ENCODE measurements at regions of chr17 and their contacts with region 1.

Region 1: DNA sequence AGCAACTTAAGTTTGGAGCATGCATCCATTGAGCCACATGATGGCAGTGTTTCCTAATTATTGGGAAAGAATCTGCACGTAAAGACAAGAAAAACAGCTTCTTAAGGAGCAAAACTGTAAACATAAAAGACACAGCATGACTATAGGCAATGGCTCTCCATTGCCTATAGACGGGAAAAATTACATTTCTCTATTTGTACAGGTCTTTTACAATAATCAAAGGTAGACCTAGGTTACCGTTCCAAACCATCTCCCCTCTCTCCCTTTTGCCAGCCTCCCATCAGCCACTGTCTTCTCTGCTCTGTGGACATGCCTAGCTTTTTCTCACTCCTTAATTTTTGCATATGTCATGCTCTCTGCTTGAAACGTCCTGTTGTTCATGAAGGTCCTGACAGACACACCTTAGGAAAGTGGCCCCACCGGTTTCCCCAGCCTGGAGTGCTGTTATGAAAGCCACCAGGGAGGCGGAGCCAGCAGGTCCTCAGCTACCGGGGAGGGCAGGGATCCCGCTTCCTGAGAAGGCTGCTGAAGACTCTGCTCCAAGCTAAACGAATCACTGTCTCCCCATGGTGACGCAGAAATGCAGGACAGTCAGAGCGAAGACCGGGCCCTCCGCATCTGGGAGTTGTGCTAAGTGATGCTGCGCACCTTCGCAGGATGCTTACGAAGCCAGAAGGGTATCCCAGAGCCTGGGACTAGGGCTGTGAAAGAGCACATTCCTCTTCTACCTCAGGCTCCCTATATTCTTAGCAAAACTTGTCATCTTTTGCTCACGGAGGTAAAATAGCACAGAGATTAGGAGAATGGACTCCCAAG is 2.2 kb upstream of the SLC16A11 start:
- DNase-seq: peak in 1 of 2 donors; percentile 90
- ATAC-seq: peak; percentile 28 to 49 (median 33)
- H3K4me3 ChIP-seq: peak overlapping the region; percentile 34
- H3K4me3 Mint-ChIP-seq: peak overlapping the region; percentile 87
- H3K27ac ChIP-seq: peak overlapping the region; percentile 45
- H3K27ac Mint-ChIP-seq: peak overlapping the region; percentile 85 to 90
- H3K4me1 ChIP-seq: peaks cover 43% of the 10 kb centered on the region
- H3K4me1 Mint-ChIP-seq: peaks cover 26 to 45% of the 10 kb centered on the region in 2 donors
- H3K27me3 ChIP-seq: peaks cover 6% of the 10 kb centered on the region
- H3K27me3 Mint-ChIP-seq: peaks cover 0 to 7% of the 10 kb centered on the region in 2 donors
- CTCF ChIP-seq: peak; percentile 81

Region 2: GRCh38 chr17:7081341-7082062 is 35.4 kb after region 1 on chr17:
- intact Hi-C with region 1: loop called (anchors 5 kb)
- DNase-seq: peak; percentile 53 to 60
- ATAC-seq: peak; percentile 95 to 100 (median 97)
- H3K4me3 ChIP-seq: no peak overlapping the region
- H3K4me3 Mint-ChIP-seq: peak overlapping the region; percentile 75
- H3K27ac ChIP-seq: no peak overlapping the region
- H3K27ac Mint-ChIP-seq: peak overlapping the region in 1 of 2 donors; percentile 32
- H3K4me1 ChIP-seq: peaks cover 40% of the 10 kb centered on the region
- H3K4me1 Mint-ChIP-seq: peaks cover 41 to 69% of the 10 kb centered on the region in 2 donors
- H3K27me3 ChIP-seq: peaks cover 3% of the 10 kb centered on the region
- H3K27me3 Mint-ChIP-seq: peaks cover 11 to 12% of the 10 kb centered on the region in 2 donors
- CTCF ChIP-seq: no peak

Region 3: DNA sequence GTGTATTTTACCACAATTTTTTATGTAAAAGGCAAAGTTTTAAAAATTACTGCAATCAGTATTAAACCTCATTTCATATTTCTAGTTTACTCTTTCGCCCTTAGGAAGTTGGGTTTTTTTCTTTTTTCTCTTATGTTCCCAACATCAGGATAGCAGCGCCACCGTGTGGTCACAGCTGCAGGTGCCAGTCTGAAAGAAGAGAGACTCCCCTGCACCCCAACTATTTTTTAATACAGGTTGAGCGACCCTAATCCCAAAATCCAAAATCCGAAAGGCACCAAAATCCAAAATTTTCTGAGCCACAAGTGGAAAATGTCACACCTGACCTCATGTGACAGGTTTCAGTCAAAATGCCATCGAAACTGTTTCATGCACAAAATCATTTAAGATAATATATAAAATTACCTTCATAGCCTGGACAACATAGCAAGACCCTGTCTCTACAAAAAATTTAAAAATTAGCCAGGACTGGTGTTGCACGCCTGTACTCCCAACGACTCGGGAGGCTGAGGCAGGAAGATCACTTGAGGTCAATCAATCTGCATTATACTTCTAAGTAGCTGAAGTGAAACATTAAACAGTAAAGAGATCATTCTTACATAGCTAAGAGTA is 90.3 kb after region 1 on chr17:
- intact Hi-C with region 1: loop called (anchors 1 kb)
- DNase-seq: peak; percentile 71 to 93
- ATAC-seq: peak in 2 of 3 donors; percentile 30 to 46
- H3K4me3 ChIP-seq: no peak overlapping the region
- H3K4me3 Mint-ChIP-seq: no peak overlapping the region
- H3K27ac ChIP-seq: no peak overlapping the region
- H3K27ac Mint-ChIP-seq: no peak overlapping the region
- H3K4me1 ChIP-seq: peaks cover 24% of the 10 kb centered on the region
- H3K4me1 Mint-ChIP-seq: peaks cover 12 to 13% of the 10 kb centered on the region in 2 donors
- H3K27me3 ChIP-seq: peaks cover 3% of the 10 kb centered on the region
- H3K27me3 Mint-ChIP-seq: peaks cover 14 to 24% of the 10 kb centered on the region in 2 donors
- CTCF ChIP-seq: peak; percentile 93

Region 4: GRCh38 chr17:7296189-7296902 is 250.2 kb after region 1 on chr17:
- intact Hi-C with region 1: loop called (anchors 5 kb)
- DNase-seq: peak; percentile 71 to 83
- ATAC-seq: peak; percentile 46 to 63 (median 49)
- H3K4me3 ChIP-seq: no peak overlapping the region
- H3K4me3 Mint-ChIP-seq: peak overlapping the region; percentile 95
- H3K27ac ChIP-seq: no peak overlapping the region
- H3K27ac Mint-ChIP-seq: no peak overlapping the region
- H3K4me1 ChIP-seq: peaks cover 28% of the 10 kb centered on the region
- H3K4me1 Mint-ChIP-seq: peaks cover 19 to 24% of the 10 kb centered on the region in 2 donors
- H3K27me3 ChIP-seq: peaks cover 18% of the 10 kb centered on the region
- H3K27me3 Mint-ChIP-seq: peaks cover 7 to 17% of the 10 kb centered on the region in 2 donors
- CTCF ChIP-seq: peak; percentile 92

Measured in natural killer cell (primary cell).